Heart right ventricle (tissue), 16 donors: ENCODE measurements at regions of chr21 and their contacts with region 1.

Region 1: DNA sequence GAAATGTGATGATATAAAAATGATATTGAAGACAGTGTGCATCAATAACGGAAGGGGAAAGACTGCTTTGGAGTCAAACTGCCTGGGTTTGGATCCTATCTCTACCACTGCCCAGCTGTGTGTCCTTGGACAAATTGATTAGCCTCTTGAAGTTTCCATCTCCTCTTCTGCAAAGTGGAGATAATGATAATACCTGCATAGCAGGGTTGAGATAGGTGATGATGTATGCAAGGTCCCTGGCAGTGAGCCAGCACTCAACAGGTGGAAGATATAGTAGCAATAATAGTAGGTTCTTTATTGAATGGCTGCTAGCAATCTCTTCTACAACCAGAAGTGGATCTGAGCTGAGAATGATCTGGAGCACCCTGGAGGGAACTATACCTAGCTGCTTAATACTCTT is 166.7 kb downstream of the MIS18A start:
- DNase-seq: no peak
- ATAC-seq: no peak
- H3K4me3 ChIP-seq: no peak overlapping the region
- H3K27ac ChIP-seq: no peak overlapping the region
- H3K4me1 ChIP-seq: no peaks in the 10 kb centered on the region
- H3K27me3 ChIP-seq: no peaks in the 10 kb centered on the region
- CTCF ChIP-seq: no peak

Region 2: GRCh38 chr21:32065632-32066031 is 46.6 kb before region 1 on chr21:
- intact Hi-C with region 1: loop called in 1 of 10 experiments (anchors 2 kb)
- DNase-seq: no peak
- ATAC-seq: no peak
- H3K4me3 ChIP-seq: no peak overlapping the region
- H3K27ac ChIP-seq: no peak overlapping the region
- H3K4me1 ChIP-seq: no peaks in the 10 kb centered on the region
- H3K27me3 ChIP-seq: peaks cover 0 to 4% (median 0%) of the 10 kb centered on the region in 7 donors
- CTCF ChIP-seq: no peak